ENCODE measurements at regions of chr3 and their contacts with region 1.

Region 1: DNA sequence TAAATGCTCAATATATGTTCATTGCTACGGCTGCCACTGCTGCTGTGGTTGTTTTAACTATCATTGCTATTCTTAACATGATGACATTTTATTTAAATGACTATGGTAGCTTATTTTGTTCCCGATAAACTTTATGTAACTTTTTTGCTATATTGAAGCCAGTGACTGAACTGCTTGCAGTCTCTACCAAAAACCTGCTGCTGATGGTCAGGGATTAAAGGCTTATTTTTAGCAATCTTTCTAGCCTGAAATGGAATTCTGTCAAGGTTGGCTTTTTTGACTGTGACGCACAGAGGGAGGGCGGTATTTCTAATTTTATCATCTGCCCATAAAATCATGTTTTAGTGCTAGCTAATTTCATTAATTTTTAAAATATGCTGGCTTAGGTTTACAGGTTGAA is 271.8 kb downstream of the KCNH8 start:
- DNase-seq: no peak
- H3K4me3 ChIP-seq: peak overlapping the region in 1 of 2 donors; percentile 37
- H3K27ac ChIP-seq: peak overlapping the region; percentile 80 to 92
- H3K4me1 ChIP-seq: peaks cover 0 to 8% of the 10 kb centered on the region in 2 donors
- H3K27me3 ChIP-seq: no peaks in the 10 kb centered on the region
- CTCF ChIP-seq: no peak

Region 2: GRCh38 chr3:18853269-18853668 is 566.9 kb before region 1 on chr3:
- intact Hi-C with region 1: no loop called
- DNase-seq: no peak
- H3K4me3 ChIP-seq: no peak overlapping the region
- H3K27ac ChIP-seq: no peak overlapping the region
- H3K4me1 ChIP-seq: no peaks in the 10 kb centered on the region
- H3K27me3 ChIP-seq: no peaks in the 10 kb centered on the region
- CTCF ChIP-seq: no peak

Region 3: DNA sequence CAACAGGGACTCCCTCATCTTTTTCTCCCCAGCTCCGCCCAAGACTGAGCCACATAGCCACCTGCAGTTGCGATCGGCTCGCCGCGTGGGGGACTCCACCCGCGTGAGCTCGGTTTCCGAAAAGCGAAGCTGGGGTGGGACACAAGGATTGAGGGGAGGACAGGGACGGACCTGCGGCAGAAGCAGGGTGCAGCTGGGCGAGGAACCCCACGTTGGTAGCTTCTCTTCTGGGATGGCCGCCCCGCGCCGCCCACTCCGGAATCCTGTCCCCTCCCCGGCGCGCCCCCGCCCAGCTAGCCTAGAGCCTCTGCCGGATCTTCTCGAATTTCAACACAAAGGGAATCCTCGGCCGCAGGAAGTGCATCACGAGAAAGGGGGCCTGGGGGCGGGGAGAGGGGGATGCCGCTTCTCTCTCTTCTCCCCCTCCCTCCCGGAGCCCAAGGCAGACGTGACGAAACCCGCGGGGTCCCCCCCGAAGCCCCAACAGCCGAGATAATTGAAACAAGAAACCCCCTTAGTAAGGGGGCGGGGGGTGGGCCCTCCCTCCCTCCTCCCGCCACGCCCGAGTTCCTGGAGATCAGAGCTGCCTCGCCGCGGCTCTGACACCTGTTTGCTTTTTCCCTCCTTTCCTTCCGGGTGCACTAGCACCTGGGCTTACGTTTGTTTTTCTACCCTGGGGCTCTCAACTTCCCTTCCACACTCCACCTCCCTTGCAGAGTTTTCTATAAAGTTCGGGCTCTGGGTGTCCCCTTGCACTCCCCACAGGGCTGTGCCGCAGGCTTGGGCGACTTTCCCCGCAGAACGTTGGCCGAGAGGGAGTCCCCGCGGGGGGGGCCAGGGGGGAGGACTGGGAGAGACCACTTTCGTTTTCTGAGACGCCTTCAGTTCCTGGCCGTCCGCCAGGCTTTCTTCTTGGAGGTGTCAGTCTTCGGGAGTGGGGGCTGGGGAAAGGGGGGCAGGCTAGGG is 273.2 kb before region 1 on chr3:
- intact Hi-C with region 1: no loop called
- DNase-seq: peak in 1 of 2 donors; percentile 70
- H3K4me3 ChIP-seq: peak overlapping the region; percentile 78 to 89
- H3K27ac ChIP-seq: no peak overlapping the region
- H3K4me1 ChIP-seq: peaks cover 5 to 8% of the 10 kb centered on the region in 2 donors
- H3K27me3 ChIP-seq: no peaks in the 10 kb centered on the region
- CTCF ChIP-seq: peak; percentile 8 to 48 (median 27)

Region 4: GRCh38 chr3:19457454-19457853 is 37.3 kb after region 1 on chr3:
- intact Hi-C with region 1: loop called (anchors 5 kb)
- DNase-seq: no peak
- H3K4me3 ChIP-seq: no peak overlapping the region
- H3K27ac ChIP-seq: peak overlapping the region; percentile 31 to 73
- H3K4me1 ChIP-seq: peaks cover 0 to 15% of the 10 kb centered on the region in 2 donors
- H3K27me3 ChIP-seq: no peaks in the 10 kb centered on the region
- CTCF ChIP-seq: no peak

Measured in ascending aorta (tissue), 2 donors.